ENCODE measurements at regions of chr4 and their contacts with region 1.

Region 1: GRCh38 chr4:40840985-40841571 is 91.3 kb downstream of the NSUN7 start:
- DNase-seq: peak; percentile 83
- ATAC-seq: peak; percentile 42

Region 2: DNA sequence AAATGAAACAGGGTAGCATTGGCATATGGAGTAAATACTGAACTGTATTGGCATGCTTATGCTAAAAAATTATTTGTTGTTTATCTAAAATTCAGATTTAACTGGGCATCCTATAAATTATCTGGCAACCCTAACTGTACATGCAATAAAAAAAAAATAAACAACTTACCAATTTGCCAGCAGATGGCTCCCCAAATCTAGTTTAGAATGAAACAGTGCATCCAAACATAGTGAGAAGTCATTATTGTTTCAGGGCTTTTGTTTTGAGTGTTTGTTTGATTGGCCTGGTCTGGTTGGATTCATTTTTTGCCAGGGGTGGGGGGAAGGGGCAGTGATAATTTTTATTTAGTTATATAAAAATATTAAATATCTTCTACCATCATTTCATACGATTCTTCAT is 104.2 kb before region 1 on chr4:
- intact Hi-C with region 1: loop called (anchors 5 kb)
- DNase-seq: no peak
- ATAC-seq: peak; percentile 28

Region 3: DNA sequence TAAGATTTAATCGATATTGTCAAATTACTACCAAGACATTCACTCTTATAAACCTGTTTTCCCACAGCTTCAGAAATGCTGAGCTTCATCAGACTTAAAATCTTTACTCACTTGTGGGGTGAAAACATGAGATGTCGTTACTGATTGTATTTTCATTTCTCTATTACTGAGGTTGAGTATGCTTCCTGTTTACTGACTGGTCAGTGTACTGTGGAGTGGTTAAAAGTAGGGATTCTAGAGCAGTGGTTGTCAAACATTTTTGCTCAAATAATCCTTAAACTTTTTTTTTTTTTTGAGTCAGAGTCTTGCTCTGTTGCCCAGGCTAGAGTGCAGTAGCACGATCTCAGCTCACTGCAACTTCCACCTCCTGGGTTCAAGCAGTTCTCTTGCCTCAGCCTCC is 41.0 kb before region 1 on chr4:
- intact Hi-C with region 1: no loop called
- DNase-seq: no peak
- ATAC-seq: no peak

Region 4: GRCh38 chr4:40897557-40898203 is 56.6 kb after region 1 on chr4:
- intact Hi-C with region 1: loop called (anchors 5 kb)
- DNase-seq: peak; percentile 87
- ATAC-seq: peak; percentile 47